ENCODE measurements at regions of chr14 and their contacts with region 1.

Region 1: GRCh38 chr14:67943947-67944346 is 124.4 kb downstream of the RAD51B start:
- DNase-seq: no peak

Region 2: GRCh38 chr14:68060198-68060597 is 116.3 kb after region 1 on chr14:
- intact Hi-C with region 1: no loop called
- DNase-seq: no peak

Region 3: DNA sequence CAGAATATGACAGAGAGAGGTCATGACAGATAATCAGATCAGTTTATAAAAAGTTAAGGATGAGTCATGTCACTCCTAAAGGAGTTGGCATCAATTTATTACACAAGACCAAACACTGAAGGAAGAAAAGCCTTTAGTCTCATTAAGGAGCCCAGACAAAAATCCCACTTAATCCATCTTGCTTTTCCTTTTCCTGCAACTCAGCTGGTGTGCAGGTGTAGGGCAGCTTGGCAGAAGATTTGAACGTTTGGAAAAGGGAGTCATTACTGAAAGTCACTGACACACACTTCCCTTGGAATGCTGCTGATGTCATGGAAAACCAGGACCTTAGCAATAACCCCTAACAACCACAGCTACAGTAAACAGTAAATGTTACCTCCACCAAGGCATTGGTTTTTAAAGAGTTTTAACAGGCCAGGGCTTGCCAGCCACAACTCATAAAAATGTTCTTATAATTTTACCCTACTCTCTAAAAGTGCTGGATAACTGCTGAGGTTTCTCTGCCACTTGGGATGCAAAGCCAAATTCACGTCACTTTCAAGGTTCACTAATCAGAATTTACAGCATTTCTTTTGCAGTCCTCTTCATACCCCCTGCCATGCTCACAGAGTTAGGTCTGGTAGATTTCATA is 196.3 kb after region 1 on chr14:
- intact Hi-C with region 1: loop called (anchors 5 kb)
- DNase-seq: no peak

Region 4: DNA sequence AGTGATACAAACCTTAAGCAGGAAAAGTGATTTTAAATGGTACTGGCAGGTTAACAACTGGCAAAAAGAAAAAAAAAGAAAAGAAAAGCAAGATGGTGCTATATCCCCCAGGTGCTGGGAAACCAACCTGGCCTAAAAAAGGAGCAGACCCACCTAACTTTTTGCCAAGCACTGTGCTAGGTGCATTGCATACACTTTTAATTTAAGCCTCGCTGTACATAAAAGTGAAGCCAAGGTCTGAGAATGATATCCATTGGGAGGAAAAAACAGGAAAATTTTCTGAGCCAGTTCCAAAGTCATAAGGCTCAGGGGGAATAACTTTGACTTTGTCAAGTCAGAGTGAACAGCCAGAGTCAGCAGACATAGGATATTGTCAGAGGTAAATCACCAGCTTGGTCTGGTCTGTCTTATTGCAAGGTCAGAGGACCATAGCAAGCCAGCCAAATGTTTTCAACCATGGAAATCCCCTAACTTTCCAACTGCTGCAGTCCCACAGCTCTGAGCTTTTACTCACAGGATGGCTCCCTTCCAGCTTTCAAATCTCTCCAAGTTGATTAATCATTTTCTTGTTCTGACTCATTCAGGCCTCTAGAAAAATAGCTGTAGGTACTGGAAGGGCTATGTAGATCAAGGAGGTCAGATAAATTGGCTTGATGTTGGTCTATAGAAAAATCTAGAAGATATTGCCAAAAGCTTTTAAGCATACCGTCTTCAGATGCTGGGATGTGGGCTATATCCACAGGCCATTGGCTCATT is 288.5 kb after region 1 on chr14:
- intact Hi-C with region 1: loop called (anchors 5 kb)
- DNase-seq: no peak

Region 5: GRCh38 chr14:68392393-68393141 is 448.6 kb after region 1 on chr14:
- intact Hi-C with region 1: loop called (anchors 5 kb)
- DNase-seq: no peak